Common myeloid progenitor, CD34-positive (primary cell): ENCODE measurements at regions of chr3 and their contacts with region 1.

Region 1: DNA sequence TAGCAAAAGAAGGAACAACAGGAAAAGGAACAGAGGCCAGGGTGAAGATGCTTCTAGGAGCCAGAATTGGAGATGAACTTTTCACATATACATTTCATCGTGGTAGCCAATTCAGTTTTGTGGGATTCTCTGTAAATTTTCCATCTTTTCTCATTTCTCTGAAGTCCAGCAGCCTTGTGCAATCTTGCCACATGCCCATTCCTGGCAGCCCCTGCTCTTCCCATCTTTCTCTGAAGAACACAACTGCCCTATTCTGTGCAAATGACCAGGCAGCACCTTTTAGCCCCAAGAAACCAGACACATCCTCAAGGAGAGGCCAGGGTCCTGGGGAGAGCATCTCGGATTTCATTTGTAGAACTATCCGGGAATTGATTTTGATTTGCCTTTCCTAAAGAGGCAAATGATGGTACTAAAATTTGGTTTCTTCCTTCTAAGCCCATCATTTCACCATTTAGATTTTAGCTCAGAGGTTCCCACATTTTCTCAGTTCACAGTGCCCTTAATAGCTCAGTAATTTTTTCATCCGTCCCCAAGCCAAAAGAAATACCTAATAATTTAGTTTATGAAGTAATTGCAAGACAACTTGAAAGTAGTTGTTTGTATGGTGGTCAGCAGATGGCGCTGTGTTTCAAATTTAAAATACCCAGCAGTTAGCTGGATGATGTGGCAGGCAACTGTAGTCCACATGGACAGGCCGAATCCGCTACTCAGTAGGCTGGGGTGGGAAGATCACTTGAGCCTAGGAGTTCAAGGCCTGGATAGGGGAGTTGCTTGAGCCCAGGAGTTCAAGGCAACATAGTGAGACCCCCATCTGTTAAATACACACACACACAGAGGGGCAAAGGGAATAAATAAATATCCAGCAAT is 61.3 kb upstream of the ACKR4 start:
- DNase-seq: peak; percentile 73 to 88 (median 81)
- H3K4me3 ChIP-seq: no peak overlapping the region
- H3K27ac ChIP-seq: no peak overlapping the region
- H3K4me1 ChIP-seq: no peaks in the 10 kb centered on the region
- H3K27me3 ChIP-seq: no peaks in the 10 kb centered on the region

Region 2: GRCh38 chr3:132283440-132283839 is 252.4 kb before region 1 on chr3:
- CTCF ChIA-PET with region 1: no interaction called
- POLR2A ChIA-PET with region 1: no interaction called
- DNase-seq: peak in 2 of 3 donors; percentile 66 to 69
- H3K4me3 ChIP-seq: no peak overlapping the region
- H3K27ac ChIP-seq: no peak overlapping the region
- H3K4me1 ChIP-seq: peaks cover 0 to 18% (median 4%) of the 10 kb centered on the region in 4 experiments
- H3K27me3 ChIP-seq: no peaks in the 10 kb centered on the region

Region 3: GRCh38 chr3:132504375-132504933 is 31.4 kb before region 1 on chr3:
- CTCF ChIA-PET with region 1: no interaction called
- POLR2A ChIA-PET with region 1: no interaction called
- DNase-seq: no peak
- H3K4me3 ChIP-seq: no peak overlapping the region
- H3K27ac ChIP-seq: no peak overlapping the region
- H3K4me1 ChIP-seq: no peaks in the 10 kb centered on the region
- H3K27me3 ChIP-seq: no peaks in the 10 kb centered on the region

Region 4: GRCh38 chr3:132522353-132522752 is 13.5 kb before region 1 on chr3:
- CTCF ChIA-PET with region 1: interaction called, 16 read pairs
- POLR2A ChIA-PET with region 1: no interaction called
- DNase-seq: no peak
- H3K4me3 ChIP-seq: no peak overlapping the region
- H3K27ac ChIP-seq: no peak overlapping the region
- H3K4me1 ChIP-seq: no peaks in the 10 kb centered on the region
- H3K27me3 ChIP-seq: no peaks in the 10 kb centered on the region

Region 5: DNA sequence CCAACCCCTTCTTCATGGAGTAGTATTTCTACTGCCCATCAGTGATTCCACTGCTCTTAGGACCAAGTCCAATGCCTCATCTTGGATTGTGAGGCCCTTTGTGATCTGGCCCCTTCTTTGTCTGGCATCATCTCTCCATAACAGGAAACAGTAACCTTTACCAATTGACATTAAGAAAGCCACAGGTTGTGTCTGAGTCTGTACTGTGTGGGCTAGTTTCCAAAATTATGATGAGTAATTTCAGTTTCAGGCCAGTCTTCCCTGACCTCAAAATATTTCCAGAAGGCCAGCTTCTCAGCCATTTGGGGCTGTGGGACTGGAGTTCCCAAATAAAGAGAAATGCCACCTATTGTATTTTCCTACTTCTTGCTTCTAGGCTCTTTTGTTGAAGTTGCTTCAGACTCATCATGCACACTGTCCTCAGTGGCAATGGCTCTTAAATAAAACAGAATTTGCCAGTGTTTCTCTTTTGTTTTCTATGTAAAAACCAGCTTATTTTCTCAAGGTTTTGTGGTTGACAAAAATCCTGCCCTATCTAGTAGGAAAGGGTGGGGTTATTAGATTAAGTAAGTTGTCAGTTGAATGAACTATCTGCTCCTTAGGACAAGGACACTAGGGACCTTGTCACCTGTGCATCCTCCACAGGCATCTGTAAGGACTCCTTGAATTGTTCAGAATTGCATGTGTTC is 14.2 kb after region 1 on chr3:
- CTCF ChIA-PET with region 1: interaction called, 39 read pairs
- POLR2A ChIA-PET with region 1: no interaction called
- DNase-seq: peak in 2 of 3 donors; percentile 20 to 35
- H3K4me3 ChIP-seq: peak overlapping the region in 2 of 7 experiments; percentile 45 to 51
- H3K27ac ChIP-seq: peak overlapping the region in 1 of 2 experiments; percentile 67
- H3K4me1 ChIP-seq: peaks cover 16 to 29% (median 22%) of the 10 kb centered on the region in 4 experiments
- H3K27me3 ChIP-seq: no peaks in the 10 kb centered on the region

Region 6: GRCh38 chr3:132635052-132635451 is 99.2 kb after region 1 on chr3:
- CTCF ChIA-PET with region 1: interaction called, 179 read pairs
- POLR2A ChIA-PET with region 1: no interaction called
- DNase-seq: no peak
- H3K4me3 ChIP-seq: no peak overlapping the region
- H3K27ac ChIP-seq: no peak overlapping the region
- H3K4me1 ChIP-seq: no peaks in the 10 kb centered on the region
- H3K27me3 ChIP-seq: no peaks in the 10 kb centered on the region

Region 7: GRCh38 chr3:132641837-132642538 is 106.2 kb after region 1 on chr3:
- CTCF ChIA-PET with region 1: interaction called, 179 read pairs
- POLR2A ChIA-PET with region 1: interaction called, 6 read pairs
- DNase-seq: peak; percentile 45 to 72 (median 62)
- H3K4me3 ChIP-seq: no peak overlapping the region
- H3K27ac ChIP-seq: no peak overlapping the region
- H3K4me1 ChIP-seq: peaks cover 0 to 3% (median 1%) of the 10 kb centered on the region in 4 experiments
- H3K27me3 ChIP-seq: no peaks in the 10 kb centered on the region